ENCODE measurements at regions of chr1 and their contacts with region 1.

Region 1: DNA sequence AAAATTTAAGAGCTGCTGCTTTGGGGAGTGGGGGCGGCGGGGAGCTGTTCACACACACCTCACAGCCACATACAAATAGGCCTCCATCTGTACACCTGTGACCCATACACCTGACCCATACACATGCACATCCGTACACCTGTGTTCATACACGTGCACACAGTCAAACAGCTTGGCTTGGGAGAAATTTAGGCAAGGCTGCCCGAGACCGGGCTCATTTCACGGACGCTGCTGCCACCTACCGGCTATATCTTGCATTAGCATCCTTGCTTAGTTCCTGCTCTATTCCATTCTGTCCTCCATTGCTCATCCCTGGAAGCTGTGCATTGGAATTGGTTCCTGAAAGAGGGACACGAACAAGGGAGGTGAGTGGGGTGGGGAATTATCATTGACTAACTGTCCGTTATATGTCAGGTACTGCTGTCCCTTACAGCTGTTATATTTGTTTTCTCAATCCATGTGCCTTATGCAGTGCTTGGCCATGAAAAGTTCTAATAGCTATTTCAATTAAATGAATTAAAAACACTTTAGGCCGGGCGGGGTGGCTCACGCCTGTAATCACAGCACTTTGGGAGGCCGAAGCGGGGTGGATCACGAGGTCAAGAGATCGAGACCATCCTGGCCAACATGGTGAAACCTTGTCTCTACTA is 37.1 kb upstream of the EPB41 start:
- DNase-seq: peak; percentile 59 to 83 (median 79)
- ATAC-seq: peak; percentile 92
- H3K4me3 ChIP-seq: no peak overlapping the region
- H3K4me1 ChIP-seq: no peaks in the 10 kb centered on the region
- CTCF ChIP-seq: peak; percentile 75

Region 2: GRCh38 chr1:28526889-28527288 is 350.4 kb before region 1 on chr1:
- intact Hi-C with region 1: loop called in 1 of 2 experiments (anchors 10 kb)
- DNase-seq: no peak
- ATAC-seq: no peak
- H3K4me3 ChIP-seq: no peak overlapping the region
- H3K4me1 ChIP-seq: no peaks in the 10 kb centered on the region
- CTCF ChIP-seq: no peak

Region 3: GRCh38 chr1:28703629-28704028 is 173.6 kb before region 1 on chr1:
- intact Hi-C with region 1: no loop called
- DNase-seq: no peak
- ATAC-seq: no peak
- H3K4me3 ChIP-seq: no peak overlapping the region
- H3K4me1 ChIP-seq: no peaks in the 10 kb centered on the region
- CTCF ChIP-seq: no peak

Region 4: DNA sequence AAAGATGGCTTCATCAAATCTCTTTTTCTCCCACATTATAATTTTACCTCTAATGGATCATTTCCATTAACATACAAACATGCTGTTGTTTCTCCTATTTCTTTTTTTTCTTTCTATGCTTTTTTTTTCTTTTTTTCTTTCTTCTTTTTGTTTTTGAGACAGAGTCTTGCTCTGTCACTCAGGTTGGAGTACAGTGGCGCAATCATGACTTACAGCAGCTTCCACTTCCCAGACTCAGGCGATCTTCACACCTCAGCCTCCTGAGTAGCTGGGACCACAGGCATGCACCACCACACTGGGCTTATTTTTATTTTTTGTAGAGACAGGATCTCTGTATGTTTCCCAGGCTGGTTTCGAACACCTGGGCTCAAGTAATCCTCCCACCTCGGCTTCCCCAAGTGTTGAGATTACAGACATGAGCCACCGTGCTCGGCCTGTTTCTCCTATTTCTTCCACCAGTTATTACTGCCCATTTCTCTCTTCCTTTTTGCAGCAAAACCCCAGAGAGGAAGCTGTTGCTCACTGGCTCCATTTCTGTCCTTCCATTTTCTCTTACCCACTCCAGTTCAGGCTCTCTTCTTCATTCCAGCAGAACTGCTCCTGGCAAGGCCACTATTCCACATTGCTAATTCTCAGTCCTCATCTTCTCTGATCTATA is 97.4 kb before region 1 on chr1:
- intact Hi-C with region 1: loop called (anchors 5 to 10 kb)
- DNase-seq: no peak
- ATAC-seq: no peak
- H3K4me3 ChIP-seq: no peak overlapping the region
- H3K4me1 ChIP-seq: no peaks in the 10 kb centered on the region
- CTCF ChIP-seq: no peak